H1 (cell line): ENCODE measurements at regions of chr1 and their contacts with region 1.

Region 1: GRCh38 chr1:211654838-211655787 is 20.3 kb downstream of the NEK2 start:
- DNase-seq: peak; percentile 67 to 96
- H3K4me3 ChIP-seq: no peak overlapping the region
- H3K27ac ChIP-seq: no peak overlapping the region
- H3K4me1 ChIP-seq: peaks cover 0 to 4% (median 0%) of the 10 kb centered on the region in 4 experiments; a peak in 3 of 7 replicates
- H3K27me3 ChIP-seq: no peaks in the 10 kb centered on the region
- CTCF ChIP-seq: peak; percentile 88 to 95 (median 90)
- EP300 ChIP-seq: no peak
- POLR2A ChIP-seq: no peak
- RAD21 ChIP-seq: peak; percentile 97 to 99

Region 2: GRCh38 chr1:211497489-211498045 is 157.5 kb before region 1 on chr1:
- CTCF ChIA-PET with region 1: no interaction called
- POLR2A ChIA-PET with region 1: no interaction called
- DNase-seq: no peak
- H3K4me3 ChIP-seq: no peak overlapping the region
- H3K27ac ChIP-seq: no peak overlapping the region
- H3K4me1 ChIP-seq: no peaks in the 10 kb centered on the region; a peak in 1 of 7 replicates
- H3K27me3 ChIP-seq: no peaks in the 10 kb centered on the region
- CTCF ChIP-seq: no peak
- EP300 ChIP-seq: no peak
- POLR2A ChIP-seq: no peak
- RAD21 ChIP-seq: no peak

Region 3: GRCh38 chr1:211578640-211579433 is 76.3 kb before region 1 on chr1 and contains the start of gene SLC30A1:
- CTCF ChIA-PET with region 1: interaction called, 20 read pairs
- POLR2A ChIA-PET with region 1: interaction called, 3 read pairs
- DNase-seq: peak; percentile 85 to 98
- H3K4me3 ChIP-seq: peak within 1 kb of the TSS; percentile 66 to 92 (median 84)
- H3K27ac ChIP-seq: no peak within 1 kb of the TSS
- H3K4me1 ChIP-seq: peaks cover 0 to 13% (median 9%) of the 10 kb centered on the region in 4 experiments; a peak in 6 of 7 replicates
- H3K27me3 ChIP-seq: no peaks in the 10 kb centered on the region
- CTCF ChIP-seq: no peak
- EP300 ChIP-seq: no peak
- POLR2A ChIP-seq: peak in 1 of 2 experiments; percentile 67; a peak in 1 of 3 replicates
- RAD21 ChIP-seq: no peak
- total RNA-seq, gene SLC30A1: 13.5 and 14.0 TPM in 2 replicates

Region 4: DNA sequence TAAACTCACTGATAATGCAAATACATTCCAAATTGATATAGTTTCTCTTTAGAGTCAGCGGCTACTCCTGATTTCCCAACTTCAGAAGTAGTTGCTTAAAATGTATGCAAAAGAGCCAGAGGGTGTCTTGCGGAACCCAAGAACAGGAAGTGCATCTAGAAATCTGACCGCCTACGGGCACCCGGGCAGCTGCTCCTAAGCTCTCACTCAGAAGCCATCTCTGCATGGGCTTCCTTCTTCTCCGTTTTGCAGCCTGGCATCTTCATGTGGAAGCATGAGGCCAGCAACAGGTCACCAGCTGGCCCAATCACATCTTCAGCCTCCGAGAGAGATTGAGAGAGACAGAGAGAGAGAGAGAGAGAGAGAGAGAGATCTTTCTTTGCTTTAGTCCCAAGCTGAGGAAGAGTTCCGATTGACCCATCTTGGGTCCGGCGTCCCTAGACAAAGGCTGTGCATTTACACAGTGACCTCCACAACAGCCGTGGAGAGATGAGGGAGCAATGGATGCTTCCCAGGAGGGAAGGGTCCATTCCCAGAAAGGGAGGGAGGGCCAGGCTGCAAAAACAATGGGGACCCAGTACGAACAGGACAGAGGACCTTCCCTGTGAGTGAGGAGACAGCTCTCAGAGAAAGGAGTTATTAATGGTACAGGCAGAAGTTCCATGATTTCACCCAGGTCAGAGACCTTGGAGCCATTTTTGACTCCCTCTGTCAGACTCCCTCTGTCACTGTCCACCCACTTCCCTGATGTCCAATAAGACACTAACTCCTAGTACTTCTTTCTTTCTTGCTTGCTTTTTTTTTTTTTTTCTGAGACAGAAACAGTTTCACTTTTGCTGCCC is 48.0 kb before region 1 on chr1:
- CTCF ChIA-PET with region 1: interaction called, 11 read pairs
- POLR2A ChIA-PET with region 1: no interaction called
- DNase-seq: no peak
- H3K4me3 ChIP-seq: no peak overlapping the region
- H3K27ac ChIP-seq: no peak overlapping the region
- H3K4me1 ChIP-seq: no peaks in the 10 kb centered on the region; a peak in 1 of 7 replicates
- H3K27me3 ChIP-seq: no peaks in the 10 kb centered on the region
- CTCF ChIP-seq: no peak
- EP300 ChIP-seq: no peak
- POLR2A ChIP-seq: no peak
- RAD21 ChIP-seq: no peak

Region 5: DNA sequence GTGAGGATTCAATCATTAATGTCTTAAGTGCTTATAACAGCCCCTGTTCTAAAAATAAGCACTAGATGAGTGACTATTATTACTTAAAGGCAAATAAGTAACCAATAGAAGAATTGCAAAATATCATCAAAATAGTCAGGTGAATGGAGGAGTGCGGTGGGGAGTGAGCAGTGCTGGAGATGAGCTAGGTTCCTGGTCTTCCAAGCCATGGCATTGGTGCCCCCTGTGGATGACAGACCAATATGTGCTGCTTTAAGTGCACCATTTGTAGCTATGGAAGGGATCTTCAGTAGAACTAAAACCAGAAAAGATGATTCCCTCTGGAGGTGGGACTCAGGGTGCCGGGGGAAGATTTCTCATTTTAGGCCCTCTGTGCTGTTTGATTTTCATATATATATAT is 30.1 kb before region 1 on chr1:
- CTCF ChIA-PET with region 1: interaction called, 11 read pairs
- POLR2A ChIA-PET with region 1: no interaction called
- DNase-seq: no peak
- H3K4me3 ChIP-seq: no peak overlapping the region
- H3K27ac ChIP-seq: no peak overlapping the region
- H3K4me1 ChIP-seq: 0 out of 7 replicates have a peak, but pooled peaks cover 0 to 1% (median 0%) of the 10 kb centered on the region in 4 experiments
- H3K27me3 ChIP-seq: no peaks in the 10 kb centered on the region
- CTCF ChIP-seq: peak; percentile 8 to 26 (median 24); a peak in 3 of 4 replicates
- EP300 ChIP-seq: no peak
- POLR2A ChIP-seq: no peak
- RAD21 ChIP-seq: peak; percentile 36 to 50; a peak in 3 of 4 replicates

Region 6: DNA sequence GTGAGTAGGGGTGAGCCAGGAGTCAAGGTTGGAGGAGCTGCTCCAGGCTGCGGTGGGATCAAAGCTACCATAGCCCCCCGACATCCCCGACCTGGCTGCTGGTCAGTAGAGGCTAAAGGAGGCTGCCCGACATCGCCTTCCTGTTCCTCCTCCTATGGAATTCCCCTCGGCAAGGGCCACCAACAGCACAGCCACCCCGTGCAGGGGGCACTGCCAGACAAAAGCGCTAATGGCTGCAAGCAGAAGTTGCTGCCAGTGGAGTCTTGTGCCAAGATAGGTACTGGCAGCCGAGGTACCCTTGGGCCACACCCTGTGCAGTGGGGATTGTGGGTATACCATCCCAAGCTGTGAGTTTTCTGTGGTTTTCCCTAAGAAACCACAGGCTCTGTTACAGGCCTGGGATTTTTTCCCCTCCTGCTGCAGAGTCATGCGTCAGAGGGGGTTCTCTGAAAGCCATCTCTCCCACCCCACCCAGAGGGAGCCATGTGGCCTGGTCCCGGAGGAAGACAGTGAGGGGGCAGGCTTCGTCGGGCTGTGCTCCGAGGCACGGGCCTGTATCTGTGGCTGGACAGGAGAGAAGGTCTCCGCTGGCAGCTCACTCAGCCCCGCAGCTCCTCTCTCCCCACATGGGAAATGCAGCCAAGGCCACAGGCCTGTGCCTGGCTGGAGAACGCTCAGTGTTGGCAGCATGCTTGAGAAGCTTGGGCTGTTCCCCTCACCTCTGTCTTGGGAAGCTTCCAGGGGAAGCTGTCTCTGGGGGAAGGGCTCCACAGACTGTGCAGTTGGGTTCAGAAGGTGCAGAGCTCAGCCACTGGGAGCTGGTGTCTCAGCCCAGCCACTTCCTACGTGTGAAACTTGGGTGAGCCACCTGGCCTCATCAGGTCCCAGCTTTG is 22.2 kb before region 1 on chr1:
- CTCF ChIA-PET with region 1: interaction called, 75 read pairs
- POLR2A ChIA-PET with region 1: no interaction called
- DNase-seq: no peak
- H3K4me3 ChIP-seq: no peak overlapping the region
- H3K27ac ChIP-seq: no peak overlapping the region
- H3K4me1 ChIP-seq: peaks cover 0 to 6% (median 1%) of the 10 kb centered on the region in 4 experiments; a peak in 1 of 7 replicates
- H3K27me3 ChIP-seq: no peaks in the 10 kb centered on the region
- CTCF ChIP-seq: no peak
- EP300 ChIP-seq: no peak
- POLR2A ChIP-seq: no peak
- RAD21 ChIP-seq: no peak

Region 7: DNA sequence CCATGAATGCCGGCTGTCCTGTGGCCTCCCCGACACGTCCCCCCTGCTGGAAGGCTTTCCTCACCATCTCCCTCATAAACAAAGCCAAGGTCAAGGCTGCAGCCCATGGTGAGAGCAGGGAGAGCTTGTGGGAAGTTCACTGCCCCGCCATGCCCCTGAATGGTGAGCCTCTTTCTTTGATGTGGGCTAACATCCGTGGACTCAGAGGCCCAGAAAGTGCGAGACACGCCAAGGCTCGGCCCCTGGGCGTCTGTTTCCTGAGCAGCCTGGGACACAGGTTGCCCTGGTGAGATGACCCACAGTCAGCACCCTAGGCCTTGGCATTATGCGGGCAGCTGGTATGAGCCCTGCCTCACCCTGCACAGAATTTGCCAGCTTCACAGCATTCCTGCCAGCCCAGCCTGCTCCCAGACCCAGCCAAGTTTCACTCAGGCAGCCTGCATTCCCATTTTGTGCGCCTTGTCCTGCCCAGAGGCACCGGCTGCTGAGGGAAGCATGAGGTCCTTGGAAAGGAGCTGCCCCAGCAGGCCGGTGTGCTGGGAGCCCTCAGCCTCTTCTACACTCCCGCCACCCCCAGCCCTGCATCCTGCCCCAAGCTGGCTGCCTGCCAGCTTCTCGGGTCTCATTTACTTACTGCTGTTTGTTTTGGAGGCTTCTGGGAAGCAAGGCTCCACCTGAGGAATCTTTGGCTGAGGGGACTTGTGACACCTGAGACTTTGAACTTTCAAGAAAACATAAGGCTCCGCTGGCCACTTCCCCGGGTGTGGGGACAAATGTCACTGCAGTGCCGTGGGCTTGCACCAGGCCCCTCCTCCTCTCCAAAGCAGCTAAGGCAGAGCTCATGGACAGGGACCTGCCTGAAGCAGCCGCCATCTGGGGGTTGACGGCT is 11.5 kb before region 1 on chr1:
- CTCF ChIA-PET with region 1: interaction called, 75 read pairs
- POLR2A ChIA-PET with region 1: no interaction called
- DNase-seq: peak in 1 of 2 experiments; percentile 45
- H3K4me3 ChIP-seq: no peak overlapping the region
- H3K27ac ChIP-seq: no peak overlapping the region
- H3K4me1 ChIP-seq: peaks cover 0 to 3% (median 2%) of the 10 kb centered on the region in 4 experiments; a peak in 2 of 7 replicates
- H3K27me3 ChIP-seq: no peaks in the 10 kb centered on the region
- CTCF ChIP-seq: no peak
- EP300 ChIP-seq: no peak
- POLR2A ChIP-seq: no peak
- RAD21 ChIP-seq: no peak